ENCODE measurements at regions of chr15 and their contacts with region 1.

Region 1: DNA sequence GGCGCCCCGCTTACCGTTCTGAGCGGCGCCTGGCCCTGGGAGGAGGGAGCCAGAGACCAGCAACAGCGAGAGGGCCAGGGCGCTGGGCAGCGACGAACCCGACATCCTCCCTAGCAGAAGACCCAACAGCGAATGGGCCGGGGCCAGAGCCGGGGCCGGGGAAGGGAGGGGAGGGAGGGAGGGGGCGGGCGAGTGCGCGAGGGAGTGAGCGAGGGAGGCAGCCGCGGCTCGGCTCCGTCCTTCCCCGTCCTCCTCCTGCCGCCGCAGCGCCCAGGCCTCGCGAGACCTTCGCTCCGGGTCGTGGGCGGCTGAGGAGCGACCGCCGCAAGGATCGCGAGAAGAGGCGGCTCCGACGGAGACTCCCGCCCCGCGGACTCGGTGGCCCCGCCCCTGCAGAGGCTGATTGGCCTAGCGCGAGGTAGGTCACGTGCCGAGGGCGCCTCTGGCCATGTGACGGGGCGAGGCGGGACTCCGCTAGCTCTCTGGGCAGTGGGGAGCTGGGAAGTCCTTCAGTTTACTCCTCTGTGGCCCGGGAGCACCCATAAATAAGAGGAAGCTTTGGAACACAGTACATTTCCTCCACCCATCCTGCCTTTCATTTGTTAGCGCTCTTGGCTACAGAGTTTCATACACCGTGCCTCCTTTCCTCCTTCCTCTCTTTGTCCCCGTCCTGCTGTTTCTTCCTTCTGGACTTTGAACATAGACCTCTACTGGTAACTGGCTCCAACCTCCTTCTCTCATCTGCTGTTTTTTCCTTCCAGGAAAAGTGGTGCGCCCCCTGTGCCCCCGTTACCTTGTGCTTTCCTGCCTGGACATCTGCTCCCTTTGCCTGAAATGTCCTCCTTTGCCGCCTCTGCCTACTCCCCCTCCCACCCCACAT is at the start of gene NPTN:
- DNase-seq: peak; percentile 100
- ATAC-seq: peak; percentile 98
- H3K4me3 ChIP-seq: peak within 1 kb of the TSS; percentile 74 to 98
- H3K27ac ChIP-seq: peak within 1 kb of the TSS; percentile 61 to 95
- H3K4me1 ChIP-seq: no peaks in the 10 kb centered on the region
- H3K27me3 ChIP-seq: no peaks in the 10 kb centered on the region
- total RNA-seq, gene NPTN: 169 to 221 TPM

Region 2: GRCh38 chr15:73560501-73561117 is 72.7 kb before region 1 on chr15:
- intact Hi-C with region 1: loop called (anchors 1 to 5 kb)
- DNase-seq: no peak
- ATAC-seq: no peak
- H3K4me3 ChIP-seq: no peak overlapping the region
- H3K27ac ChIP-seq: no peak overlapping the region
- H3K4me1 ChIP-seq: no peaks in the 10 kb centered on the region
- H3K27me3 ChIP-seq: no peaks in the 10 kb centered on the region

Region 3: DNA sequence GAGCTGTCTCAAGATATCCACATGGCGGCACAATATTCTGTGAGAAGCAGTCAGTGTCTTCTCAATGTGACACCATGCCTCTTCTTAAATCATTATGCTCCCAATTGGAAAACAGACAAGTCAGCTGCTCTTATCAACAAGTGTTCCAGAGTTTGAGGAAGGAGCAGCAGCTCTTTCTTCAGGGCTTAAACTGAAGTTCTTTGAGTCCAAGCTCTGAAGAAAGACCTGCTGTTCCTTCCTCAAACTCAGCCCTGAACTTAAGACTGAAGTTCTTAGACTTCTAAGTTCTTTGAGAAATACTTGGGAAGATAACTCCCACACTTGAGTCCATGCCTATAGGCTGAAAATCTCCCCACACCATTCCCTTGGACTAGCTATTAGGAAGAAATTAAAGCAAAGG is 43.6 kb before region 1 on chr15:
- intact Hi-C with region 1: no loop called
- DNase-seq: no peak
- ATAC-seq: no peak
- H3K4me3 ChIP-seq: no peak overlapping the region
- H3K27ac ChIP-seq: no peak overlapping the region
- H3K4me1 ChIP-seq: peaks cover 0 to 6% of the 10 kb centered on the region in 2 donors
- H3K27me3 ChIP-seq: no peaks in the 10 kb centered on the region

Region 4: DNA sequence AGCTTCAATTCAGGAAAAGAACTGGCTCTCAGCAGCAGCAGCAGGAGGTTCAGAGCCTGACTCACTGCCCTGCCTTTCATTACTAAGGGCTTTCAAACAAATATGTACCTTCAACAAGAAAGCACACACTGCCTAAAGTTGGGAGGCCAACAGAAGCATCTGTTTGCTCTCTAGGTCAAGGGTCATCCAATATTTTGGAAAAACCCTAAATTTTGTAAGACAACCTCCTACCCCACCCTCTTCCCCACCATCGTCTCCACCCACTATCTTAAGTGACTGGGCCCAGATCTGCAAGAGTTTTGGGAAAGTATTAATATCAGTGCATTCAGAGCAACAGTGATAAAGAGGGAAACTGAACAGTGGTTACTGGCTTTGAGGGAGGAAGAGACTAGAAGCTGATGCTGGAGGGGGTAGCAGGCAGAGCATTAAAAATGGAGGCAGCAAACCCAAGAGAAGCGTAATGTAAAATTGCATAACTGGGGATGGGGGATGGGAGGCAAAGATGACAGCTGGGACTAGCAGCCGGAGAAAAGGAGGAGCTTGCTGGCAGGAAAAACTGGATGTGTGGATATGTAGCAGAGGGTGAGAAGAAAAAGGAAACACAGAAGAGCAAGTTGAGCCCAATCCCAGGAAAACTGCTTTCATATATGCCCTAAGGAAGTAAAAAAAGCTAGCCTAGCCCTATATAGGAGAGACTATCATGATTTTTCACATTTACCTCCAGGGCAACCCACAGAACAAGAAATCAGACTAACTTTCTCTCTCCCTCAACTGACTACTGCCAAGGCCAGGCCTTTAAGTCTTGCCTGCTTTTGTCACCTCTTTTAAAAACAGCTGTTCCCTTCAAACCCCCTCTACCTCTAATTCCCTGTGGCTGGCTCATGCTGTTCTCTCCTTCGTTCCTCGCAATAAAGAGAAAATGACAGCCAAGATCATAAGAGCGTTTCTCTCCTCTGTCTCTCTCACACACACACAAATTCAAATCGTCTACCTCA is 31.6 kb before region 1 on chr15:
- intact Hi-C with region 1: loop called (anchors 2 to 5 kb)
- DNase-seq: peak in 1 of 2 donors; percentile 66
- ATAC-seq: peak; percentile 57
- H3K4me3 ChIP-seq: no peak overlapping the region
- H3K27ac ChIP-seq: peak overlapping the region; percentile 57 to 99
- H3K4me1 ChIP-seq: peaks cover 15 to 22% of the 10 kb centered on the region in 2 donors
- H3K27me3 ChIP-seq: no peaks in the 10 kb centered on the region

Region 5: GRCh38 chr15:73717802-73718201 is 84.5 kb after region 1 on chr15:
- intact Hi-C with region 1: no loop called
- DNase-seq: no peak
- ATAC-seq: no peak
- H3K4me3 ChIP-seq: no peak overlapping the region
- H3K27ac ChIP-seq: no peak overlapping the region
- H3K4me1 ChIP-seq: no peaks in the 10 kb centered on the region
- H3K27me3 ChIP-seq: no peaks in the 10 kb centered on the region